IMR-90 (cell line): ENCODE measurements at regions of chr3 and their contacts with region 1.

Region 1: DNA sequence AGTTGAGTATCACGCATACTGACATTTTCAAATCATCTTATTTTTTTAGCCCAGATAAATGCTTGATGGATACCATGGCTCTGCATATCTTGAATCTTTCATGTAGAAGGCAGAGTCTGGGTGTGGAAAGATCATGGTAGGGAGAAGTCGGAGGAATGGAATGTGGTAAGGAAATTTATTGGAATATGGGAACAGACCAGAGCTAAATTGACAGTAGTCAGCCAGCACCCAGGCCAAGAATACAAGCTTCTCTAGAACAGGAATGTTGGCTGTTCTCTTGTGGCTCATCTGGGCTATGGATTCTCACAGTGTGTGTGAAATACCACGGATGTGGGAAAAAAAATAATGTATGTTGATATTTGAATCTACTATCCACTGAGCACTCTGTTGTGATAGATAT is 305.7 kb upstream of the COL8A1 start:
- DNase-seq: peak; percentile 26
- ATAC-seq: peak; percentile 46; the same call in 1 of the 2 replicates
- H3K4me3 ChIP-seq: no peak overlapping the region
- H3K27ac ChIP-seq: no peak overlapping the region
- H3K4me1 ChIP-seq: peaks cover 3% of the 10 kb centered on the region; the same call in 1 of the 2 replicates
- H3K27me3 ChIP-seq: no peaks in the 10 kb centered on the region
- CTCF ChIP-seq: no peak
- POLR2A ChIP-seq: no peak
- RAD21 ChIP-seq: no peak

Region 2: GRCh38 chr3:99298661-99299060 is 34.1 kb before region 1 on chr3:
- CTCF ChIA-PET with region 1: no interaction called
- POLR2A ChIA-PET with region 1: no interaction called
- dilution Hi-C with region 1: no loop called
- in situ Hi-C with region 1: no loop called
- intact Hi-C with region 1: no loop called
- DNase-seq: no peak
- ATAC-seq: no peak
- H3K4me3 ChIP-seq: no peak overlapping the region
- H3K27ac ChIP-seq: no peak overlapping the region
- H3K4me1 ChIP-seq: no peaks in the 10 kb centered on the region
- H3K27me3 ChIP-seq: no peaks in the 10 kb centered on the region
- CTCF ChIP-seq: no peak
- POLR2A ChIP-seq: no peak
- RAD21 ChIP-seq: no peak

Region 3: GRCh38 chr3:99344216-99344615 is 11.5 kb after region 1 on chr3:
- CTCF ChIA-PET with region 1: interaction called, 11 read pairs
- POLR2A ChIA-PET with region 1: no interaction called
- dilution Hi-C with region 1: no loop called
- in situ Hi-C with region 1: no loop called
- intact Hi-C with region 1: no loop called
- DNase-seq: peak; percentile 35
- ATAC-seq: peak; percentile 17; the same call in 1 of the 2 replicates
- H3K4me3 ChIP-seq: no peak overlapping the region
- H3K27ac ChIP-seq: no peak overlapping the region
- H3K4me1 ChIP-seq: no peaks in the 10 kb centered on the region
- H3K27me3 ChIP-seq: no peaks in the 10 kb centered on the region
- CTCF ChIP-seq: no peak
- POLR2A ChIP-seq: no peak
- RAD21 ChIP-seq: no peak

Region 4: DNA sequence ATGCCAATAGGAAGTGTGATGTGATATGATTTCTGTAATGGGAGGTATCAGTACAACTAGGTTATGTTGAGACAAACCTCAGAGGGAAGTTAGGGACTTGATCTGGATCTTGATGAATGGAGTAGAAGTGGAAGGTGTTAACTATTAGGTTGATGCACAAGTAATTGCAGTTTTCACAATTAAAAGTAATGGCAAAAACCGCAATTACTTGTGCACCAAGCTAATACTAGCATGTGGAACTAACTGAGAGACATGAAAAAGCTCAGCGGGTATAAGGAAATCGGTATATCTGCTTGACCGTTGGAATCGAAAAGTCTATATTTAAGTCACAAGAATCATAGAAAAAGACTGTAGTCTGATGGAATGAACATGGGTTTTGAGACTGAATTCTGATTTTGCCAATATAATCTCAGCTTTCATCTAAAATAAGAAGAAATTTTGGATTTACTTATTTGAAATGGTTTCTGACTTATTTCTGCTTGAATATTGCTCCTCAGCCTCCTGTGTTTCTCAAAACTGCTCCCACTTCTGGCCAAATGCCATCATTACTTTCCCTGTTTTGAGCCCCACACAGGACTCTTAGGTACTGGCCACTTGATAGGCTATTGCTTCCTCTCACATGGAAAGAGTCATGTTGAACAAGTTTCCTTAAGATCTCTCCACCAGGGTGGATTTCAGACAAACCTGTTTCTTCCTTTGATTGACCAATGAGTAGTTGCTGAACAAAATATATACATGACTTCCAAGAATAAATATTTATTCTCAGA is 34.1 kb after region 1 on chr3:
- CTCF ChIA-PET with region 1: no interaction called
- POLR2A ChIA-PET with region 1: no interaction called
- dilution Hi-C with region 1: no loop called
- in situ Hi-C with region 1: no loop called
- intact Hi-C with region 1: loop called (anchors 1 kb)
- DNase-seq: no peak
- ATAC-seq: peak; percentile 32; the same call in 1 of the 2 replicates
- H3K4me3 ChIP-seq: no peak overlapping the region
- H3K27ac ChIP-seq: no peak overlapping the region
- H3K4me1 ChIP-seq: no peaks in the 10 kb centered on the region
- H3K27me3 ChIP-seq: no peaks in the 10 kb centered on the region
- CTCF ChIP-seq: no peak
- POLR2A ChIP-seq: no peak
- RAD21 ChIP-seq: no peak